Posterior vena cava (tissue), 2 donors: ENCODE measurements at regions of chr7 and their contacts with region 1.

Region 1: GRCh38 chr7:42202601-42203000 is 34.4 kb downstream of the GLI3 start:
- DNase-seq: no peak

Region 2: GRCh38 chr7:42843205-42843800 is 640.7 kb after region 1 on chr7:
- intact Hi-C with region 1: loop called in 1 of 2 experiments (anchors 5 kb)
- DNase-seq: no peak